Dendritic cell treated with granulocyte-macrophage colony-stimulating factor and Interleukin-4, amounts not matched to agents 40 ng/mL and 50 ng/mL, for 4 days (primary cell): ENCODE measurements at regions of chr10 and their contacts with region 1.

Region 1: DNA sequence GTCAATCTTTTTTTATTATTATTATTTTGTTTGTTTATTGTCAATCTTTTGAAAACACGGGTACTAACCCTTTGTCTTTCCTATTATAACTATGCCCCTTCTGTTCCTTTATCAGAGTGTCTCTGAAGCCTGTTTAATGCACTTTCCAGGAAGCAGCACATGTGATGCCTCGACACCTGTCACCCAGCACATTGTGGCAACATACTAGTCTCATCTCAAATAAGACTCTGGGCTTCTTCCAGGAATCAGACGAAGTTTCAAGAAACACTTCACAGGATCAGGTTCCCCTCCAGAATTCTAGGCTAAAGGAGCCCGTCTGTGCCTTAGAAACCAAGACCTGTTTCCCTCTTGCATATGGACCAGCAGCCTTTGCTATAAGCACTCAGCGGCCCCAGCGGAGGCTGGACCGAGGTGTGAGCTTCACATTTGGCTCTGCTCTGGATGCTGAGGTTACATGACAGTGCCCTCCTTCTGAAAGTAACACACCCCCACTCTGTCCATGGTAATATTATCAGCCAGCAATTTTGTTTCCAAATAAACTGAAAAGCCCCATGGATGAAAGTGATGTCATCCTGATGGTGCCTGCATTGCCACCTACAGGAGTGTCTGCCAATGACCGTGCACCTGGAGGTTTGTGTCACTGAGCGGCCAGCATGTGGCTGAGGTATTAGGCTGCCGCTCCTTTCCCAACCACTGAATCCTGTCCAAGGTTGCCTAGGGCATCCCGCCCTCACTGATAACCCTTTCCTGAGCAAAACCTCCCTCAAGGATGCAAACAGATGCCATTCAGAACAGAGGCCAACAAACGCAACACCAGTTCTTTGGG is 38.1 kb downstream of the MKI67 start:
- H3K4me3 Mint-ChIP-seq: no peak overlapping the region
- H3K27ac Mint-ChIP-seq: no peak overlapping the region
- H3K4me1 Mint-ChIP-seq: peaks cover 39% of the 10 kb centered on the region
- H3K27me3 Mint-ChIP-seq: no peaks in the 10 kb centered on the region

Region 2: GRCh38 chr10:128125944-128126764 is 38.1 kb after region 1 on chr10 and contains the start of gene MKI67:
- intact Hi-C with region 1: loop called (anchors 5 kb)
- H3K4me3 Mint-ChIP-seq: peak within 1 kb of the TSS; percentile 84
- H3K27ac Mint-ChIP-seq: peak within 1 kb of the TSS; percentile 62
- H3K4me1 Mint-ChIP-seq: peaks cover 35% of the 10 kb centered on the region
- H3K27me3 Mint-ChIP-seq: peaks cover 5% of the 10 kb centered on the region

Region 3: DNA sequence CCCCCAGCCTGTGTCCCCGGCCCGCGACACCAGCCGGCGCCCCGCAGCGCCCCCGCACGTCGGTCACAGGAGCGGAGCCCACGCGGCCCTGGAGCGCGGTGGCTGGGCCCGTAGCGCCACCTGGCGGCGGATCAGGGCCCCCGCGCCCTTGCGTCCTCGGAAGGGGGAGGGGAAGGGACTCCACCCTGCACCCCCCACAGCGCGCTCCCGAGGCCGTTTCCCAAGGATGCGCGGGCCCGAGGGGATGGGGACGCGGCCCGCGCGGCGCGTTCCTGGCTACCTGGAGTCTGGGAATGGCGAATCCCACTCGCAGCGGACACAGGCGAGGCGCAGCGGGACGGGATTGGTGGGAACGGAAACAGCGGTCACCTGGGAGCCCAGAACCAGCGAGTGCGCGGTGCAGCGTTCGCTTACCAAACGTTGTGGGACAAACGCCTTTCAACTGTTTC is 62.0 kb after region 1 on chr10:
- intact Hi-C with region 1: no loop called
- H3K4me3 Mint-ChIP-seq: peak overlapping the region; percentile 80
- H3K27ac Mint-ChIP-seq: no peak overlapping the region
- H3K4me1 Mint-ChIP-seq: peaks cover 10% of the 10 kb centered on the region
- H3K27me3 Mint-ChIP-seq: peaks cover 54% of the 10 kb centered on the region